Astrocyte of the cerebellum (primary cell): ENCODE measurements at regions of chr10 and their contacts with region 1.

Region 1: GRCh38 chr10:73136627-73137026 is 26.4 kb downstream of the NUDT13 start:
- DNase-seq: no peak
- H3K4me3 ChIP-seq: no peak overlapping the region
- CTCF ChIP-seq: no peak

Region 2: GRCh38 chr10:72702868-72703581 is 433.6 kb before region 1 on chr10:
- in situ Hi-C with region 1: no loop called
- DNase-seq: no peak
- H3K4me3 ChIP-seq: no peak overlapping the region
- CTCF ChIP-seq: peak; percentile 14

Region 3: DNA sequence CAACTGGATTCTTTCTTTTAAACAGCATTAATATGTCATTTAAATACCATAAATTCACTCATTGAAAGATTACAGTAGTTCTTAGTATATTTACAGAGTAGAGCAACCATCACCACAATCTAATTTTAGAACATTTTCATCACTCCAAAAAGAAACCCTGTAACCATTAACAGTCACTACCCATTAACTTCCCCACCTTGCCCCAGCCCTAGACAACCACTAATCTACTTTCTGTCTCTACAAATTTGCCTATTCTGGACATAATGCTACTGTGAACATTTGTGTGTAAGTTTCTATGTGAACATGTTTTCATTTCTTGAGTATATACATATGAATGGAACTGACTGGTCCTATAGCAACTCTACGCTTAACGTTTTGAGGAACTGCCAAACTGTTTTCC is 82.3 kb before region 1 on chr10:
- in situ Hi-C with region 1: loop called (anchors 5 kb)
- DNase-seq: no peak
- H3K4me3 ChIP-seq: no peak overlapping the region
- CTCF ChIP-seq: no peak

Region 4: DNA sequence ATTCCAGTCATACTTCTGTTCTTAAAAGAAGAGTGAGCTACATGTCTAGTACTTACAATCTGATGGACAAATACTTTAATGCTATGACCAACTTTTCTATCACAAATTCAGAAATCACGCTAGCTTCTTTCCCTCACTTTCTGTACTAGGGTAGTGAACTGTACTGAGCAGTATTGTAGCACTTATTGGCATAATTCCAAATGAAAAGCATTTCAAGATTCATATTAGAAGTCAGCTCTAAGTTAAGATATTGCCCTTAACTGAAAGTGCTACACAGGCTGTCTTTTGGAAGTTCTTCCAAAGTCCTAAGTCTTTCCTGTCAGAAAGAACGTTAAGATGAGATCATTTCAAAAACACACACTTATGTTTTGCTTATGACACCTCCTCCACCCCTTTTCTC is 53.4 kb before region 1 on chr10:
- in situ Hi-C with region 1: no loop called
- DNase-seq: no peak
- H3K4me3 ChIP-seq: no peak overlapping the region
- CTCF ChIP-seq: no peak